ENCODE measurements at regions of chr3 and their contacts with region 1.

Region 1: GRCh38 chr3:44729384-44729910 is at the start of gene ZNF501:
- DNase-seq: peak; percentile 86 to 90
- H3K4me3 ChIP-seq: peak within 1 kb of the TSS; percentile 64 to 83 (median 78)
- H3K27ac ChIP-seq: peak within 1 kb of the TSS; percentile 64; the same call in 1 of the 2 replicates
- H3K4me1 ChIP-seq: no peaks in the 10 kb centered on the region
- H3K27me3 ChIP-seq: no peaks in the 10 kb centered on the region
- CTCF ChIP-seq: peak in 2 of 3 experiments; percentile 6 to 18; a peak in 3 of 4 replicates
- EP300 ChIP-seq: no peak
- POLR2A ChIP-seq: peak; percentile 79 to 86
- RAD21 ChIP-seq: peak in 1 of 2 experiments; percentile 25; a peak in 1 of 4 replicates
- total RNA-seq, gene ZNF501: 5.3 and 6.4 TPM in 2 replicates

Region 2: GRCh38 chr3:44685128-44685800 is 44.2 kb before region 1 on chr3:
- CTCF ChIA-PET with region 1: no interaction called
- POLR2A ChIA-PET with region 1: no interaction called
- DNase-seq: peak in 1 of 2 experiments; percentile 78
- H3K4me3 ChIP-seq: peak overlapping the region in 1 of 4 experiments; percentile 68; a peak in 2 of 8 replicates
- H3K27ac ChIP-seq: no peak overlapping the region
- H3K4me1 ChIP-seq: no peaks in the 10 kb centered on the region
- H3K27me3 ChIP-seq: no peaks in the 10 kb centered on the region; a peak in 2 of 7 replicates
- CTCF ChIP-seq: no peak
- EP300 ChIP-seq: no peak
- POLR2A ChIP-seq: no peak
- RAD21 ChIP-seq: no peak

Region 3: GRCh38 chr3:44712455-44713075 is 16.9 kb before region 1 on chr3 and contains the start of gene ZNF502:
- CTCF ChIA-PET with region 1: interaction called, 5 read pairs
- POLR2A ChIA-PET with region 1: interaction called, 44 read pairs
- DNase-seq: peak in 1 of 2 experiments; percentile 74
- H3K4me3 ChIP-seq: peak within 1 kb of the TSS; percentile 67 to 98 (median 85)
- H3K27ac ChIP-seq: peak within 1 kb of the TSS; percentile 73
- H3K4me1 ChIP-seq: no peaks in the 10 kb centered on the region
- H3K27me3 ChIP-seq: no peaks in the 10 kb centered on the region
- CTCF ChIP-seq: peak; percentile 33 to 50 (median 46); a peak in 3 of 4 replicates
- EP300 ChIP-seq: no peak
- POLR2A ChIP-seq: peak; percentile 54 to 92
- RAD21 ChIP-seq: peak; percentile 36 to 38; a peak in 3 of 4 replicates
- total RNA-seq, gene ZNF502: 3.5 and 3.8 TPM in 2 replicates

Region 4: DNA sequence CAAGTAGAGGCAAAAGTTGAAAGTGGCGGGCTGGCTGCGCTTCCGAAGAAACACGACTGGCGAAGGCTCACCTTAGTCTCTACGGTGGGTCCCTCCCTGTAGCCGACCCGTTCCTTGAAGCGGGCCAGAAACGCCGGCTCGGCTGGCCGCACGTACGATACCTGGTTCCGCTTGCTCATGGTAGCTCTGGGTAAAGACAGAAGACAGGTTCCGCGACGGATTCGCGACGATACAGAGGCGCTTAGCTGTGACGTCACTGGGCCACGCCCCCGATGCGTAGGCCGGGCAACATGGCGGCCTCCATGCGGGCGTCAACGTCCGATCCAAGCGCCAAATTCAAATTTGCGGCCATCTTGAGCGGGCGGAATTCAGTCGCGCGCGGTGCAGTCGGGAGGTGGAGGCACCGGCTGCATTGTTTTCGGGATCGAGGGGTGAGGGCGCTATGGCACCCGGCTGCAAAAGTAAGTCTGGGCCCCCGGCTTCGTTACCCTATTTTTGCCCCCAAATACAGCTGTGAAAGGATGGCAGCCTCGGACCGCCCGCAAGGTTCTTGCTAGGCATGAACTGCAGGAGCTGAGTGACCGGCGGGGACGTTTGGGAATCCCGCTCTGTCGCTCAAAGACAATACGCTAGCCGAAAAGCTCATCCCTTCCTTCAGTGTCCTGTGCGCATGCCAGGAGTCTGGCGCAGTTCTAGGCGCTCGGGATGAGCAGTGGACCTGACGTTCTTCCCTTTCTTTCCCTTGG is 32.1 kb after region 1 on chr3 and contains the starts of genes KIAA1143 and KIF15:
- CTCF ChIA-PET with region 1: no interaction called
- POLR2A ChIA-PET with region 1: interaction called, 37 read pairs
- DNase-seq: peak; percentile 91 to 98
- H3K4me3 ChIP-seq: peak within 1 kb of the TSS; percentile 89 to 97 (median 92)
- H3K27ac ChIP-seq: peak within 1 kb of the TSS; percentile 92
- H3K4me1 ChIP-seq: no peaks in the 10 kb centered on the region; a peak in 1 of 7 replicates
- H3K27me3 ChIP-seq: no peaks in the 10 kb centered on the region
- CTCF ChIP-seq: no peak; a peak in 1 of 4 replicates
- EP300 ChIP-seq: 0 out of 3 replicates have a peak, but pooled peaks of 1 of the 2 experiments have one; percentile 24
- POLR2A ChIP-seq: peak; percentile 95 to 98
- RAD21 ChIP-seq: no peak; a peak in 1 of 4 replicates
- total RNA-seq, gene KIAA1143: 65.1 and 67.2 TPM in 2 replicates
- total RNA-seq, gene KIF15: 25.5 and 26.4 TPM in 2 replicates

Region 5: GRCh38 chr3:44906997-44907396 is 177.6 kb after region 1 on chr3:
- CTCF ChIA-PET with region 1: no interaction called
- POLR2A ChIA-PET with region 1: no interaction called
- DNase-seq: no peak
- H3K4me3 ChIP-seq: no peak overlapping the region
- H3K27ac ChIP-seq: no peak overlapping the region
- H3K4me1 ChIP-seq: no peaks in the 10 kb centered on the region
- H3K27me3 ChIP-seq: no peaks in the 10 kb centered on the region
- CTCF ChIP-seq: no peak
- EP300 ChIP-seq: no peak
- POLR2A ChIP-seq: no peak
- RAD21 ChIP-seq: no peak